ENCODE measurements at regions of chr4 and their contacts with region 1.

Region 1: GRCh38 chr4:94732358-94732698 is 25.4 kb upstream of the BMPR1B start:
- DNase-seq: no peak
- ATAC-seq: no peak
- H3K4me3 ChIP-seq: no peak overlapping the region
- H3K27ac ChIP-seq: no peak overlapping the region
- H3K4me1 ChIP-seq: no peaks in the 10 kb centered on the region
- H3K27me3 ChIP-seq: peaks cover 0 to 8% (median 0%) of the 10 kb centered on the region in 9 donors
- CTCF ChIP-seq: no peak
- POLR2A ChIP-seq: no peak

Region 2: DNA sequence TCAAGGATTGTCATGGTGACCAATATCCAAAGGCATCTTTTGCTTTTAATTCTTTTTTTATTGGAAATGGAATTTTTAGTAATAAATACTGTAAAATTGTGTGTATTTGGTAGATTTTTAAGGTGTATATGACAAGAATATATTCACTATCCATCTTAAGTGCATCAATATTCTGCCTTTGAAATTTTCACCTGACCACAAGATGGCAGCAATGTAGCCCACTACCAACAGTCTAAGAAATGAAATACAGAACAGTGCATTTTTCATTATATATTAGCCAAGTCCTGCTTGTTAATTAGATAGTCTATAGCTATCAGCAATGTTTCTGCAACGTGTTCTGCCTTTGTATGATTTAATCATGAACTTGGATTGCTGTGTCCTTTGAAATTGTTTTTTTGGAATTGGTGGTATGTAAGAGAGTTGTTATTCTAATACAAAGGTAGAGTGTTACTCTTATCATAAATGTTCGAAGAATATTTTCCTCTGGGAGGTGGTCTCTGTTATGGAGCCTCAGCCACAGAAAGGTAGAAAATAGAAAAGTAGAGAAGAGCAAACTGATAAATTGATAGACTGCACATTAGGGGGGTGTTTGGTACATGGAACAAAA is 427.9 kb before region 1 on chr4:
- intact Hi-C with region 1: loop called in 1 of 10 experiments (anchors 10 kb)
- DNase-seq: no peak
- ATAC-seq: peak in 1 of 4 donors; percentile 70
- H3K4me3 ChIP-seq: no peak overlapping the region
- H3K27ac ChIP-seq: no peak overlapping the region
- H3K4me1 ChIP-seq: peaks cover 0 to 17% (median 5%) of the 10 kb centered on the region in 12 donors
- H3K27me3 ChIP-seq: no peaks in the 10 kb centered on the region
- CTCF ChIP-seq: peak; percentile 39 to 71 (median 54)
- POLR2A ChIP-seq: no peak

Region 3: GRCh38 chr4:94332983-94333590 is 399.2 kb before region 1 on chr4:
- intact Hi-C with region 1: loop called in 3 of 10 experiments (anchors 5 to 10 kb)
- DNase-seq: no peak
- ATAC-seq: peak in 3 of 4 donors; percentile 72 to 83 (median 81)
- H3K4me3 ChIP-seq: no peak overlapping the region
- H3K27ac ChIP-seq: no peak overlapping the region
- H3K4me1 ChIP-seq: peaks cover 0 to 16% (median 5%) of the 10 kb centered on the region in 12 donors
- H3K27me3 ChIP-seq: no peaks in the 10 kb centered on the region
- CTCF ChIP-seq: peak in 11 of 12 donors; percentile 22 to 61 (median 46)
- POLR2A ChIP-seq: no peak

Region 4: DNA sequence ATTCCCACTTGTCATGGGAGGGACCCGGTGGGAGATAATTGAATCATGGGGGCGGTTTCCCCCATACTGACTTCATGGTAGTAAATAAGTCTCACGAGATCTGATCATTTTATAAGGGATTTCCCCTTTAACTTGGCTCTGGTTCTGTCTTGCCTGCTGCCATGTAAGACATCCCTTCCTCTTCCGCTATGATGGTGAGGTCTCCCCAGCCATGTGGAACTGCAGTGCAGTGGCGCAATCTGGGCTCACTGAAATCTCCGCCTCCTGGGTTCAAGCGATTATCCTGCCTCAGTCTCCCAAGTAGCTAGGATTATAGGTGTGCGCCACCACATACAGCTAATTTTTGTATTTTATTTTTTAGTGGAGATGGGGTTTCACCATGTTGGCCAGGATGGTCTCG is 392.5 kb before region 1 on chr4:
- intact Hi-C with region 1: loop called in 4 of 10 experiments (anchors 5 to 10 kb)
- DNase-seq: no peak
- ATAC-seq: peak in 2 of 4 donors; percentile 22 to 42
- H3K4me3 ChIP-seq: peak overlapping the region in 1 of 12 donors; percentile 1
- H3K27ac ChIP-seq: no peak overlapping the region
- H3K4me1 ChIP-seq: peaks cover 0 to 21% (median 2%) of the 10 kb centered on the region in 12 donors
- H3K27me3 ChIP-seq: no peaks in the 10 kb centered on the region
- CTCF ChIP-seq: no peak
- POLR2A ChIP-seq: no peak

Region 5: GRCh38 chr4:94665500-94666404 is 66.6 kb before region 1 on chr4:
- intact Hi-C with region 1: no loop called
- DNase-seq: no peak
- ATAC-seq: no peak
- H3K4me3 ChIP-seq: no peak overlapping the region
- H3K27ac ChIP-seq: no peak overlapping the region
- H3K4me1 ChIP-seq: peaks cover 0 to 5% (median 0%) of the 10 kb centered on the region in 12 donors
- H3K27me3 ChIP-seq: no peaks in the 10 kb centered on the region
- CTCF ChIP-seq: no peak
- POLR2A ChIP-seq: no peak

Region 6: GRCh38 chr4:94798808-94799207 is 66.5 kb after region 1 on chr4:
- intact Hi-C with region 1: no loop called
- DNase-seq: no peak
- ATAC-seq: no peak
- H3K4me3 ChIP-seq: no peak overlapping the region
- H3K27ac ChIP-seq: no peak overlapping the region
- H3K4me1 ChIP-seq: peaks cover 0 to 6% (median 0%) of the 10 kb centered on the region in 12 donors
- H3K27me3 ChIP-seq: peaks cover 0 to 5% (median 0%) of the 10 kb centered on the region in 9 donors
- CTCF ChIP-seq: no peak
- POLR2A ChIP-seq: no peak

Measured in heart left ventricle (tissue), 16 donors.